HEK293T (cell line): ENCODE measurements at regions of chr3 and their contacts with region 1.

Region 1: GRCh38 chr3:53044711-53045517 is 959 bp downstream of the SFMBT1 start:
- DNase-seq: peak; percentile 80

Region 2: DNA sequence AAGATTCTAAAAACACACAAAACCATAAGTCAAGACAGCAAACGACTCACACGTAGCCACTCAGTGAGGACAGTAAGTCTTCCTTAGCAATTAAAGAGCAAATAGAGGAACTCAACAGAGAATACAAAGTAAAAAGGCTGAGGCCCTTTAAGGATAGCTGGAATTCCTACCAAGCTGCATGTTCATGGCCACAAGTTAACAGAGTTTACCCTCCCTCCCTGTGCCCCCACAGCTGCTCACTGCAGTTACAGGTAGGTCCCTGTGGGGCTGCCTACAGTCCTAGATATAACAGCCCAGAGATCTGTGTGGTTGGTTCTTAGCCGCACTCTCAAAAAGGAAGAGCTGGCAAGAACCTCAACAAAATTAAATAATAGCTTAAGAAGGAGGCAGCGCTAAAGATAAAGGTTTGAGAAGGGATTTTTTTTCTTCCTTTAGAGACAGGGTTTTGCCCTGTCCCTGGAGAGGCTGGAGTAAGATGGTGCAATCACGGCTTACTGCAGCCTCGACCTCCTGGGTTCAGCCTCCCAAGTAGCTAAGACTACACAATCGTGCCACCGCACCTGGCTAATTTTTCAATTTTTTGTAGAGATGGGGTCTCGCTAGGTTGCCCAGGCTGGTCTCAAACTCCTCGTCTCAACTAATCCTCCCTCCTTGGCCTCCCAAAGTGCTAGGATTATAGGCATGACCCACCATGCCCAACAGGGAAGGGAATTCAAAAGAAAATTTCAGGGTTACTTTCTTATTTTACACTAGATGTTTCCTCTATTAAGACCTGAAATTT is 18.3 kb before region 1 on chr3:
- CTCF ChIA-PET with region 1: no interaction called
- POLR2A ChIA-PET with region 1: interaction called, 12 read pairs
- DNase-seq: no peak

Region 3: GRCh38 chr3:53072653-53073552 is 28.0 kb after region 1 on chr3:
- CTCF ChIA-PET with region 1: no interaction called
- POLR2A ChIA-PET with region 1: no interaction called
- DNase-seq: peak; percentile 85